K562 (cell line): ENCODE measurements at regions of chr6 and their contacts with region 1.

Region 1: DNA sequence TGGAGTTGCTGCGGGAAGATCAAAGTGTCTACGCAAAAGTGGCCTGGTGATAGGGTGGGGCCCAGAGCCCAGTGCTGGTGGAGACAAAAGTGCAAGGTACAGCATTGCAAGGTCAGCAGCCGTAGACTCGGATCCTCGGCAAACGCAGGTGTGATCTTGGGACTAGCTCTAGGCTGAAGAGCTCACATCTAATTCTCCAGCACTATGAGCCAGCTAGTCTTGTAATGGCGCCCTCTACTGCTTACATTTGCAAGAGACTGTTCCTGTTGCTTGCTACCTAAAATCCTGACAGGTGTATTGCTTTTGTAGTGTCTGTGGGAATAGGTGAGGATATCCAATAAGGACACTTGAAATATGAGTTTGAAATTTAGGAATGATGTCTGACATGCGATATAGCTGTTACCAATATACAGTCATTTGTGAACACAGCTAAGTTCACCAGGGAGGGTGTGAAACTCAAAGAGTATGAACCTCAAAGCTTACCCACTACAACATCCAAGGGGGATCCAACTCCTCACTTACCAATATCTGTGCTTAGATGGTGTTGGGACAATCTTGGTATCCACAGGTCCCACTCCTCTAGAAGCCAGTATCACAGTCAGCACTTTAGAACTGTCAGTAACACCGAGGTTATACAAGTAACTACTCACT is 58.4 kb downstream of the PDE7B start:
- DNase-seq: peak; percentile 35 to 74 (median 49)
- ATAC-seq: peak; percentile 96
- H3K4me3 ChIP-seq: no peak overlapping the region
- H3K27ac ChIP-seq: no peak overlapping the region
- H3K4me1 ChIP-seq: no peaks in the 10 kb centered on the region
- H3K27me3 ChIP-seq: peaks cover 0 to 2% of the 10 kb centered on the region in 2 experiments; a peak in 1 of 5 replicates
- CTCF ChIP-seq: peak; percentile 70 to 74 (median 71)
- EP300 ChIP-seq: no peak
- POLR2A ChIP-seq: no peak
- RAD21 ChIP-seq: peak; percentile 59 to 72

Region 2: GRCh38 chr6:135506270-135506997 is 403.4 kb before region 1 on chr6:
- CTCF ChIA-PET with region 1: interaction called, 3 read pairs
- POLR2A ChIA-PET with region 1: no interaction called
- in situ Hi-C with region 1: no loop called
- intact Hi-C with region 1: loop called (anchors 2 kb)
- DNase-seq: peak; percentile 29 to 67 (median 48)
- ATAC-seq: peak; percentile 93
- H3K4me3 ChIP-seq: no peak overlapping the region
- H3K27ac ChIP-seq: no peak overlapping the region
- H3K4me1 ChIP-seq: peaks cover 0 to 6% of the 10 kb centered on the region in 2 experiments; a peak in 3 of 5 replicates
- H3K27me3 ChIP-seq: no peaks in the 10 kb centered on the region
- CTCF ChIP-seq: peak; percentile 49 to 90 (median 73); a peak in 5 of 6 replicates
- EP300 ChIP-seq: no peak
- POLR2A ChIP-seq: no peak
- RAD21 ChIP-seq: peak; percentile 93 to 94